ENCODE measurements at regions of chr6 and their contacts with region 1.

Region 1: DNA sequence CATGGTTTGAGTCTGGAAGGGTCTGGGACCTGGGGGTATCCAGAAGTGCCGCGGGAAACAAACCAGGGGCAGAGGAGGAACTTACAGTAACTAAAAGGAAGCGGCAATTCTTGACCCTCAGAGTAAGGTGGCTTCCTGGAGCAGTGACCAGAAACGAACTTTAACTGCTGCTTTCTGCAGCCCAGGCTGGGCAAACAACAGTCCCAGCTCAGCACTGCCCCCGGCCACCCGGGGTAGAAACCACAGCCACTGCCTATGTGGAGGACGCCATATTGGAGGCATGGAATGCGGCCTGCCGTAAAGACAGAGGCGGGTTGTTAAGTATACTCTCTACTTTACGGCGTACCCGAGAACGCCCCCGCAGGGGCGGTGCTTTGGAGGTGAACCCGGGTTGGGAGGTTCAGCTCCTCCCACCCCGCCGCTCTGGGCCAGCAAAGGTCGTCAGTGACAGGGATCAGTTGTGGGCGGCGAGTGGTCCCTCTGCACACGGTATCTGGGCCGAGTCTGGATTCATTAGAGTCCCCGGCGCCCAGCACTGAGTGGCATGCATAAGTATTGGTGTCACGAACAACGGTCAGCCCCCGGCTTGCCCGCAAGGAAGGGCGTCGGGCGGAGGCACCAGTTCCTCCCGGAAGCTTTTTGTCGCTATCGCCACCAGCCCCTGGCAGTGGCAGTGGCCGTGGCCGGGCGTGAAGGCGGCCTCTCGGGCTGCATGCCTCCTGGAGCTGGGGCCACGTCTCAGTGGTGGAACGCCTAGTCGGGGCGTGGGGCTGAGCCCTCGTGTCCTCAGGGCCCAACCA is at the start of gene PDSS2:
- DNase-seq: peak; percentile 99
- ATAC-seq: peak; percentile 96
- H3K4me3 Mint-ChIP-seq: peak within 1 kb of the TSS; percentile 95
- H3K27ac Mint-ChIP-seq: peak within 1 kb of the TSS; percentile 95
- H3K4me1 Mint-ChIP-seq: peaks cover 20% of the 10 kb centered on the region
- H3K27me3 Mint-ChIP-seq: peaks cover 2% of the 10 kb centered on the region
- total RNA-seq, gene PDSS2: 14.2 to 14.6 TPM

Region 2: GRCh38 chr6:107489636-107490565 is 30.4 kb after region 1 on chr6 and contains the start of gene SOBP:
- CTCF ChIA-PET with region 1: interaction called, 4 read pairs
- POLR2A ChIA-PET with region 1: interaction called, 10 read pairs
- DNase-seq: peak; percentile 50
- ATAC-seq: peak; percentile 62
- H3K4me3 Mint-ChIP-seq: peak within 1 kb of the TSS; percentile 81
- H3K27ac Mint-ChIP-seq: peak within 1 kb of the TSS; percentile 64
- H3K4me1 Mint-ChIP-seq: peaks cover 28% of the 10 kb centered on the region
- H3K27me3 Mint-ChIP-seq: peaks cover 55% of the 10 kb centered on the region
- total RNA-seq, gene SOBP: 1.0 to 1.2 TPM

Region 3: DNA sequence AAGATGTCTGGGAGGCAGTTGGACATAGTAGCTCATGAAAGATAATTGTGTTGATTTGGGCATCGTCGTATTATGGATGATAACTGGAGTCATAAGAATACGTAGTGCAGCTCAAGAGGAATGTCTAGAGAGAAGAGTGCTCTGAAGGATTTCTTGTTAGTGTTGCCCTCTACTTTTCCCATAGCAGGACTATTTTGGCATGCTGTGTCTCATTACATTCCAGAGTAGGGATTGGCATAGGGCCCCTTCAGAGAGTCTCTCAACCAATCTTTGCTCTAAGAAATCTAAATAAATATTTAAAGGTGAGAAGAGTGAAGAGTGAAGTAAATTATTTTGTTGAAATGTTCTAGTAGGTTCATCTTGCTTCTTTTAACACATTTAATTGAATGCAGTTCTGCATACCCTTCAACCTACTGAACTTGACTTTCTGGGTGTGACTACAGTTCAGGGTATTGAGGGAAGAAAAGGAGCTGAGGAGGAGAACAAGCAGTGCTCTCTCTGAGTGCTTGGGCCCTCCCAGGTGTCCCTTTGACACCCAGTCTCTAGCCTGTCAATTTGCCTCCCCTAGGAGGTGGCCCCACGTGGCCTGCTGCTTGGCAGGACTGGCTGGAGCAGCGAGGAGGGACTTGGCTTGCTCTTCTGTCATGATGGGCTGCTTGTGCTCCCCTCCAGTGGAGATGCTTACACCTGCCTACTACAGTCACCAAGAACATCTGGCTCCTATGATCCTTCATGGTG is 63.7 kb after region 1 on chr6:
- CTCF ChIA-PET with region 1: no interaction called
- POLR2A ChIA-PET with region 1: no interaction called
- DNase-seq: no peak
- ATAC-seq: no peak
- H3K4me3 Mint-ChIP-seq: no peak overlapping the region
- H3K27ac Mint-ChIP-seq: no peak overlapping the region
- H3K4me1 Mint-ChIP-seq: no peaks in the 10 kb centered on the region
- H3K27me3 Mint-ChIP-seq: peaks cover 20% of the 10 kb centered on the region

Measured in activated CD8-positive, alpha-beta T cell treated with anti-CD3 and anti-CD28 coated beads, Interleukin-2, amount 10 ng/mL, durations not matched to agents 7 days and 5 days (primary cell).